Mammary epithelial cell (primary cell): ENCODE measurements at regions of chr4 and their contacts with region 1.

Region 1: GRCh38 chr4:73788411-73788810 is 48.0 kb downstream of the CXCL8 start:
- DNase-seq: no peak
- H3K4me3 ChIP-seq: no peak overlapping the region
- H3K27ac ChIP-seq: no peak overlapping the region
- H3K4me1 ChIP-seq: no peaks in the 10 kb centered on the region
- H3K27me3 ChIP-seq: no peaks in the 10 kb centered on the region
- CTCF ChIP-seq: no peak

Region 2: DNA sequence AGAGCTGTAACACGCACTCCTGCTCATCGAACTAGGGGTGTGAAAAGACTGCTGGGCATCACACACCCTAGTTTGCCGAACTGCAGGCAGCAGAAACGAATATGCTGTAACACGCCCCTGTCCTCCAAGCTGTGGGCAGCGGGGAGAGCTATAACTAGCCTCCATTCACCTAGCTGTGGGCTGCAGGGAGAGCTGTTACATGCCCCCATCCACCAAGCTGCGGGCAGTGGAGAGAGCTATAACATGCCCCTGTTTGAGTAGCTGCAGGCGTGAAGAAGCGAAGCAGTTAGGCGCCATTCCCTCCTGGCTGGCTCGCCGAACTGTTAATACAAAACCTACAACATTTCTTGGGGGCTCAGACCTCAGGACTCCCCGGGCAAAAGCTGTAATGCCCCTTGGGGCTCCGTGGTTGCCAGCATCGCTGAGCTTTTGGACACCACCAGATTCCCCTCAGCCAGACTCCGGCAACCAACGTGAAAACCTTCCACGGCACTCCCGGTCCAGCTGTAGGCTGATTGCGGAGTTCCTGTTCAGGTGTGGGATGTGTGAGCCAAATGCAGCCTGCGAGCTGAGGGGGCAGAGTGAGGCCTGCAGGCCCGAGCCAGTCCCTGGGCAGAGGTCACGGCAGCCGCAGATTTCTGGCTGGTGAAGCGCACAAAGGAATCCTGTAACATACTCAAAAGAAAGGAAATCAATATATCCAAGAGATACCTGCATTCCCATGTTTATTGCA is 488.7 kb before region 1 on chr4:
- CTCF ChIA-PET with region 1: no interaction called
- dilution Hi-C with region 1: no loop called
- in situ Hi-C with region 1: no loop called
- intact Hi-C with region 1: no loop called
- DNase-seq: no peak
- H3K4me3 ChIP-seq: no peak overlapping the region
- H3K27ac ChIP-seq: no peak overlapping the region
- H3K4me1 ChIP-seq: no peaks in the 10 kb centered on the region
- H3K27me3 ChIP-seq: no peaks in the 10 kb centered on the region
- CTCF ChIP-seq: no peak

Region 3: DNA sequence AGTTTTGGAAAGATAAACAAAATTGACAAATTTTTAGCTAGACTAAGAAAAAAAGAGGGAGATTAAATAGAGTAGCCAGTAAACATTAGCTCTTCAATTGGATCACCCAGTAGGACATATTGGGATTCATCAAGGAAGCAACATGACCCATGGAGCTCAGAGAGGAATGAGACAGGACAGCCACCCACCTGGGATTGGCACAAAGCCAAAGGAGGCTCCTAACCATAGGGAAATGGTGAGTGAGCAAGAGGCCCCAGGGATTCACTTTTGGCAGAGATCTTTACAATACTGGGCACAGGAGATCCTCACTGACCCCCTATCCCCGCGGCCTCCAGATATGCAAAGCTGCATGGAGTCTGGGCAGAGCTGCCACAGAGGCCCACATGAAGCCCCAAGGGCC is 13.3 kb after region 1 on chr4:
- CTCF ChIA-PET with region 1: no interaction called
- dilution Hi-C with region 1: no loop called
- in situ Hi-C with region 1: no loop called
- intact Hi-C with region 1: loop called (anchors 2 kb)
- DNase-seq: no peak
- H3K4me3 ChIP-seq: no peak overlapping the region
- H3K27ac ChIP-seq: no peak overlapping the region
- H3K4me1 ChIP-seq: no peaks in the 10 kb centered on the region
- H3K27me3 ChIP-seq: no peaks in the 10 kb centered on the region
- CTCF ChIP-seq: no peak

Region 4: GRCh38 chr4:73904491-73904890 is 116.1 kb after region 1 on chr4:
- CTCF ChIA-PET with region 1: interaction called, 17 read pairs
- dilution Hi-C with region 1: no loop called
- in situ Hi-C with region 1: no loop called
- intact Hi-C with region 1: no loop called
- DNase-seq: no peak
- H3K4me3 ChIP-seq: no peak overlapping the region
- H3K27ac ChIP-seq: no peak overlapping the region
- H3K4me1 ChIP-seq: peaks cover 20% of the 10 kb centered on the region
- H3K27me3 ChIP-seq: no peaks in the 10 kb centered on the region
- CTCF ChIP-seq: no peak